PC-9 (cell line): ENCODE measurements at regions of chr11 and their contacts with region 1.

Region 1: GRCh38 chr11:36361901-36362391 is 65.9 kb downstream of the PRR5L start:
- DNase-seq: peak; percentile 66 to 87
- H3K4me3 ChIP-seq: peak overlapping the region; percentile 36; the same call in 1 of the 2 replicates
- H3K27ac ChIP-seq: peak overlapping the region; percentile 61
- H3K4me1 ChIP-seq: peaks cover 39% of the 10 kb centered on the region
- H3K27me3 ChIP-seq: no peaks in the 10 kb centered on the region
- CTCF ChIP-seq: no peak

Region 2: GRCh38 chr11:36447972-36448371 is 86.0 kb after region 1 on chr11:
- CTCF ChIA-PET with region 1: no interaction called
- POLR2A ChIA-PET with region 1: no interaction called
- intact Hi-C with region 1: loop called (anchors 5 kb)
- DNase-seq: peak; percentile 95 to 98
- H3K4me3 ChIP-seq: no peak overlapping the region
- H3K27ac ChIP-seq: peak overlapping the region; percentile 38
- H3K4me1 ChIP-seq: peaks cover 51% of the 10 kb centered on the region
- H3K27me3 ChIP-seq: no peaks in the 10 kb centered on the region
- CTCF ChIP-seq: no peak